Heart right ventricle (tissue), 16 donors: ENCODE measurements at regions of chr5 and their contacts with region 1.

Region 1: GRCh38 chr5:137888857-137889759 is at the start of gene PKD2L2:
- DNase-seq: peak; percentile 84 to 91
- ATAC-seq: peak; percentile 97 to 99 (median 98)
- H3K4me3 ChIP-seq: peak within 1 kb of the TSS; percentile 41 to 65 (median 60)
- H3K27ac ChIP-seq: peak within 1 kb of the TSS; percentile 83 to 96 (median 92)
- H3K4me1 ChIP-seq: peaks cover 0 to 34% (median 22%) of the 10 kb centered on the region in 9 donors
- H3K27me3 ChIP-seq: no peaks in the 10 kb centered on the region
- CTCF ChIP-seq: peak in 4 of 9 donors; percentile 16 to 40 (median 26)
- total RNA-seq, gene PKD2L2: 0.42 to 1.7 (median 0.53) TPM in 9 of 10 donors, not detected in the other

Region 2: GRCh38 chr5:137833463-137833862 is 55.6 kb before region 1 on chr5:
- intact Hi-C with region 1: loop called in 4 of 10 experiments (anchors 5 kb)
- DNase-seq: no peak
- ATAC-seq: no peak
- H3K4me3 ChIP-seq: no peak overlapping the region
- H3K27ac ChIP-seq: peak overlapping the region in 9 of 10 donors; percentile 28 to 92 (median 58)
- H3K4me1 ChIP-seq: peaks cover 2 to 78% (median 36%) of the 10 kb centered on the region in 9 donors
- H3K27me3 ChIP-seq: no peaks in the 10 kb centered on the region
- CTCF ChIP-seq: no peak

Region 3: DNA sequence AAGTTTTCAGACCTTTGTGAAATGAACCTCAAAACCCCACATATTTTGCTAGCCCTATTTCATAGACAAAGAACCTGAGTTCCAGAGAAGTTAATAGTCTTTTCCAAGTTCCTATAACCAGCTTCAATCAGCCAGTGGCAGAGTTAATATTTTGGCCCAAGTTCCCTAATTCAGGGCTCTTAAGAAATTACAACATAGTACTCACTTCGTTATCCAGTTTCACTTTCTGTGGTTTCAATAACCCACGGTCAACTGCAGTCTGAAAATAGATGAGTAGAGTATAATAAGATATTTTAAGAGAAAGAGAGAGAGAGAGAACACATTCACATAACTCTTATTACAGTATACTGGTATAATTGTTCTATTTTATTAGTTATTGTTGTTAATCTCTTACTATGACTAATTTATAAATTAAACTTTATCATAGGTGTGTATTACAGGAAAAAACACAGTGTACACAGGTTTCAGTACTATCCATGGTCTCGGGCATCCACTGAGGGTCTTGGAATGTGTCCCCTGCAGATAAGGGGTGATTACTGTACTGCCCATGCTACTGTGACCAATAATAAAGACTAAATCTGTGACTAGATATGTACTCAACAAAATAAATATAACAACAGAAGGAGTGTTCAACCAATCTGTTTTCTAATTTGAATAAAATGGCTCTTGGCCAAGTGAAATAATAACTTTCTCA is 30.7 kb before region 1 on chr5:
- intact Hi-C with region 1: loop called in 1 of 10 experiments (anchors 2 kb)
- DNase-seq: no peak
- ATAC-seq: peak; percentile 67 to 89 (median 82)
- H3K4me3 ChIP-seq: peak overlapping the region in 9 of 10 donors; percentile 3 to 49 (median 31)
- H3K27ac ChIP-seq: peak overlapping the region; percentile 34 to 89 (median 76)
- H3K4me1 ChIP-seq: peaks cover 0 to 37% (median 33%) of the 10 kb centered on the region in 9 donors
- H3K27me3 ChIP-seq: no peaks in the 10 kb centered on the region
- CTCF ChIP-seq: no peak

Region 4: DNA sequence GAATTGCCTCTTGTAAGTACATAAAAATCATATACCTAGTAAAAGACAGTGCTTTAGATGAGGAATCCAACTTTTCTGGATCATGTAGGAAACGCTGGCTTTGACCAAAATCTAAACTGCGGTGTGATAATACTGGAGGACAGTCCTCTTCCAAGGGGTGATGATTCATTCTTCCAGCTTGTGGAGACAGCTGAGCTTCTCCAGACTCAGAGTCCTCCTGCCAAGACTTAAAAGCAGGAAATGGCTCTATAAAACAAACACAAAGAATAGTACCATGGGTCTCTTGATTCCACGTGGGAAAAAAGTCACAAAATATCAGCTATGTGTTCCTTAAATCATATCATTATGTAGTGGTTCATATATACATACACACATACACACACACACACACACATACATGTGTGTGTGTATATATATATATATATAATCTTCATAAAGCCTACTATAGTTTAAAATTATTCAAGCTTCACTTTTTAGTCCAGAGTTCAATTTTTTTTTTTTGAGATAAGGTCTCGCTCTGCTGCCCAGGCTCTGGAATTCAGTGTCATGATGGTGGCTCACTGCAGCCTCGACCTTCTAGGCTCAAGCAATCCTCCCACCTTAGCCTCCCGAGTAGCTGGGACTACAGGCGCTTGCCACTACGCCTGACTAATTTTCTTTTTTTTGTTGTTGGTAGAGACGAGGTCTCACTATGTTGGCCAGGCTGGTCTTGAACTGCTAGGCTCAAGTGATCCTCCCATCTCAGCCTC is 65.2 kb after region 1 on chr5:
- intact Hi-C with region 1: loop called in 1 of 10 experiments (anchors 5 kb)
- DNase-seq: peak in 1 of 2 donors; percentile 61
- ATAC-seq: peak; percentile 80 to 96 (median 92)
- H3K4me3 ChIP-seq: peak overlapping the region in 1 of 10 donors; percentile 3
- H3K27ac ChIP-seq: peak overlapping the region in 8 of 10 donors; percentile 15 to 75 (median 62)
- H3K4me1 ChIP-seq: peaks cover 0 to 29% (median 18%) of the 10 kb centered on the region in 9 donors
- H3K27me3 ChIP-seq: no peaks in the 10 kb centered on the region
- CTCF ChIP-seq: no peak